ENCODE measurements at regions of chr20 and their contacts with region 1.

Region 1: DNA sequence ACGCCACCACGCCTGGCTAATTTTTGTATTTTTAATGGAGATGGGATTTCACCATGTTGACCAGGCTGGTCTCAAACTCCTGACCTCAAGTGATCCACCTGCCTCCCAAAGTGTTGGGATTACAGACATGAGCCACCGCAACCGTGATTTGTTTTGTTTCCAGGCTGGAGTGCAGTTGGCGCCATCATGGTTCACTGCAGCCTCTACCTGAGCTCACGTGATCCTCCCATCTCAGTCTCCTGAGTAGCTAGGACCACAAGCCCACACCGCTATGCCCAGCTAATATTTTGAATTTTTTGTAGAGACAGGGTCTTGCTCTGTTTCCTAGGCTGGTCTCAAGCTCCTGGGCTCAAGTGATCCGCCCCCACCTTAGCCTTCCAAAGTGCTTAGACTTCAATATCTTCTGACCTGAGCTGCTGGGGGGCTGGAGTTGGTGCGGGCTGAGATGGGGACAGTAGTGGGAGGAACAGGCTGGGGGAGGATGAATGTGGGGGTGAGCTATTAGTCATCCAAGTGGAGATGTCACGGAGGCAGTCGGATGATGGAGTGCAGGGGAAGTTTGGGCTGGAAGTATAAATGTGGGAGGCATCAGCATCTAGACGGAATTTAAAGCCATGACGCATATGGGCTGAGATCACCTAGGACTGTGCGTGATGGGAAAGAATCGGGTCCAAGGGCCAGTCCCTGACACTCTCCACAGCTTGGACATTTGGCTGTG is 23.1 kb upstream of the ZMYND8 start:
- DNase-seq: peak; percentile 56 to 92
- ATAC-seq: peak; percentile 72 to 74
- H3K4me3 ChIP-seq: no peak overlapping the region
- H3K27ac ChIP-seq: peak overlapping the region; percentile 90 to 92
- H3K4me1 ChIP-seq: peaks cover 60% of the 10 kb centered on the region
- CTCF ChIP-seq: no peak
- EP300 ChIP-seq: peak; percentile 89 to 93
- POLR2A ChIP-seq: no peak
- RAD21 ChIP-seq: peak in 1 of 2 experiments; percentile 7; a peak in 3 of 5 replicates

Region 2: GRCh38 chr20:46757754-46758678 is 621.6 kb before region 1 on chr20:
- CTCF ChIA-PET with region 1: interaction called, 116 read pairs
- POLR2A ChIA-PET with region 1: no interaction called
- DNase-seq: peak; percentile 70
- ATAC-seq: peak; percentile 67 to 80; a peak in 4 of 6 replicates
- H3K4me3 ChIP-seq: no peak overlapping the region
- H3K27ac ChIP-seq: peak overlapping the region; percentile 4 to 57; a peak in 4 of 6 replicates
- H3K4me1 ChIP-seq: 0 out of 3 replicates have a peak, but pooled peaks cover under 1% of the 10 kb centered on the region
- CTCF ChIP-seq: peak; percentile 90
- EP300 ChIP-seq: no peak
- POLR2A ChIP-seq: no peak
- RAD21 ChIP-seq: peak; percentile 89

Region 3: GRCh38 chr20:47252879-47253307 is 126.7 kb before region 1 on chr20:
- CTCF ChIA-PET with region 1: interaction called, 51 read pairs
- POLR2A ChIA-PET with region 1: no interaction called
- DNase-seq: no peak
- ATAC-seq: no peak
- H3K4me3 ChIP-seq: no peak overlapping the region
- H3K27ac ChIP-seq: no peak overlapping the region
- H3K4me1 ChIP-seq: 0 out of 3 replicates have a peak, but pooled peaks cover 4% of the 10 kb centered on the region
- CTCF ChIP-seq: no peak
- EP300 ChIP-seq: no peak
- POLR2A ChIP-seq: no peak
- RAD21 ChIP-seq: no peak

Region 4: GRCh38 chr20:47296950-47297349 is 82.6 kb before region 1 on chr20:
- CTCF ChIA-PET with region 1: interaction called, 33 read pairs
- POLR2A ChIA-PET with region 1: no interaction called
- DNase-seq: peak in 1 of 2 experiments; percentile 44
- ATAC-seq: peak in 1 of 2 experiments; percentile 65; a peak in 3 of 6 replicates
- H3K4me3 ChIP-seq: no peak overlapping the region
- H3K27ac ChIP-seq: peak overlapping the region; percentile 69 to 81
- H3K4me1 ChIP-seq: peaks cover 29% of the 10 kb centered on the region
- CTCF ChIP-seq: peak; percentile 23; the same call in 1 of the 3 replicates
- EP300 ChIP-seq: no peak
- POLR2A ChIP-seq: no peak
- RAD21 ChIP-seq: peak; percentile 41 to 70; a peak in 3 of 5 replicates

Region 5: DNA sequence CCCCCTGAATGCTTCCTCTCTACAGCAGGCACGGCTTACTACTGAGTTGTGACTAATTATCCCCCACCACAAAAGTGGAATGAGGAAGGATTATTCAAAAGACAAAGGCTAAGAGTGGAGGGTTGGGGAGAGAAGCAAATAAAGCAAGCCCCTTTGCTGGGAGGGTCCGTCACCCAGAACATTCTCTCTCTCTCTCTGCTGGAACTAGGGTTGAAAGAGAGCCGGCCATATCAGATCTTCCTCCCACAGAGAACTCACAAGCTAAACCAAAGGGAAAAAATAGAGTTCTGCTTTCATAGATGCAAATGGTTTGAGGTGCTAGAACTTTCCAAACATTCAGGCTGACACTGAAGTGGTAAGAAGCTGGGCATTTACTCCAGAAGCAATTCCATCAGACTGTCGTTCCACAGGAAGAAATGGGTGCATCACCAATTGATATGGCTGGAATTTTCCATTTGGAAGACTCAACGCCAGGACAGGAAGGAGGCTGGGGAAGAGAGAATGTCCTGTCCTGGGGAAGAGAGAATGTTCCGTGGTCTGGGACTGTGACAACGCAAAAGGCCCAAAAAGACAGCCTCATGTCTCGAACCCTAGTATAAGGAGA is 31.0 kb before region 1 on chr20:
- CTCF ChIA-PET with region 1: interaction called, 46 read pairs
- POLR2A ChIA-PET with region 1: interaction called, 3 read pairs
- DNase-seq: no peak
- ATAC-seq: no peak
- H3K4me3 ChIP-seq: no peak overlapping the region
- H3K27ac ChIP-seq: peak overlapping the region; percentile 59 to 100
- H3K4me1 ChIP-seq: peaks cover 64% of the 10 kb centered on the region
- CTCF ChIP-seq: no peak
- EP300 ChIP-seq: no peak
- POLR2A ChIP-seq: no peak
- RAD21 ChIP-seq: no peak

Region 6: DNA sequence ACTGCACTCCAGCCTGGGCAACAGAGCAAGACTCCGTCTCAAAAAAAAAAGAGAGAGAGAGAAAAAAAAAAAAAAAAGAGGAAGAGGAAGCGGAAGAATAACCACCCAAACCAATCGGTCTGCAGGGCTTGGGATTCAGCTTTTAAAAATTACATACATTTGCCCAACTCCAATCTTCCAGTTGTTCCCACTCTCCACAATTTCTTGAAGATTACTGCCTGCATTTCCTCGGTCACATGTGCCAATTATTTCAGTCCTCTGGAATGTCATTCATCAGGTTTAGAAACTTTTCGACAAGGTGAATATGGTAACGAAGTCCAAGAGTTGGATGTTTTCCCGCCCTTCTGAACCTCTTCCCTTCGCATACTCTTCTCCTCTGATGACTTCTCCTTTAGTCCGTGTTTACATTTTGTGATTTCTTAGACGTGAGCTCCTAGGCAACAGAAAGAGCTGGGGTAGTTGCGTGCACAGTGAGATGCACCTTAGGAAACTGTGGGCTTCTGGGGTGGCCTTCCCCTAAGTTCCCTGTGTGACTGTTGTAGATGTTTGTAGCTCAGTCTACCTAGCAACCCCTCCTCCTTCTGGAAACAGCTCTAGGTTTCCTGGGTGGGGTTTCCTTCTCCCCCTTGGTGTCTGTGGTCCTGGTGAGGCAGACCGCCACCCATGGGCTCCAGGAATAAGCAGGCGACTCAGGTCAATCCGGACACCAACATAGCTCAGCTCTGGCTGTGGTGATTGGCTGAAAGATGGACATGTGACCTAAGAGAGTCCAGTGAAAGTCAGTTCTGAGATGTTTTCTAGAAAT is 59.2 kb after region 1 on chr20:
- CTCF ChIA-PET with region 1: interaction called, 11 read pairs
- POLR2A ChIA-PET with region 1: no interaction called
- DNase-seq: peak in 1 of 2 experiments; percentile 62
- ATAC-seq: peak in 1 of 2 experiments; percentile 55; a peak in 3 of 6 replicates
- H3K4me3 ChIP-seq: no peak overlapping the region
- H3K27ac ChIP-seq: peak overlapping the region; percentile 48 to 72; a peak in 5 of 6 replicates
- H3K4me1 ChIP-seq: peaks cover 23% of the 10 kb centered on the region
- CTCF ChIP-seq: no peak
- EP300 ChIP-seq: no peak
- POLR2A ChIP-seq: no peak
- RAD21 ChIP-seq: no peak